ENCODE measurements at regions of chr11 and their contacts with region 1.

Region 1: GRCh38 chr11:123707606-123708205 is 33.8 kb downstream of the ZNF202 start:
- DNase-seq: peak; percentile 17
- H3K4me3 Mint-ChIP-seq: no peak overlapping the region
- H3K27ac Mint-ChIP-seq: no peak overlapping the region
- H3K4me1 Mint-ChIP-seq: no peaks in the 10 kb centered on the region
- H3K27me3 Mint-ChIP-seq: peaks cover 9% of the 10 kb centered on the region

Region 2: DNA sequence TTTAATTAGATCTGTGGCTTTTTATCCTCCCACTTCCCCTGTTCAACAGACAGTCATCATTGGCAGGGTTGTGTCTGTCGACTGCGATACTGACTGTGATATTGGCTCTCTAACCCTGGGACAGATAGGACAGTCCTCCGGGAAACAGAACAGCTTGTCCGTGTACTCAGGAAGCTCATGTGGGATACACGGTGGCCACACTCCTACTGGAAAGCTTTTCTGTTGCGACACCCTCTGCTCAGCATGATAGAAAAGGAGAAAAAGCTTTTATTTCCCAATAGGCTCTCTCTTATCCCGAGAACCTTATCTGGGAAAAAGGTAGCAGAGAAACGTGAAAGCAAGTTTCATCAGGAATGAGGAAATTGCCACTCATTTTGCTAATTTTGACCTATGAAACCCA is 585.4 kb before region 1 on chr11:
- intact Hi-C with region 1: no loop called
- DNase-seq: no peak
- H3K4me3 Mint-ChIP-seq: no peak overlapping the region
- H3K27ac Mint-ChIP-seq: no peak overlapping the region
- H3K4me1 Mint-ChIP-seq: peaks cover 7% of the 10 kb centered on the region
- H3K27me3 Mint-ChIP-seq: peaks cover 1% of the 10 kb centered on the region

Region 3: GRCh38 chr11:123640677-123641494 is 66.8 kb before region 1 on chr11:
- intact Hi-C with region 1: loop called (anchors 1 kb)
- DNase-seq: peak; percentile 29
- H3K4me3 Mint-ChIP-seq: no peak overlapping the region
- H3K27ac Mint-ChIP-seq: no peak overlapping the region
- H3K4me1 Mint-ChIP-seq: peaks cover 2% of the 10 kb centered on the region
- H3K27me3 Mint-ChIP-seq: peaks cover 6% of the 10 kb centered on the region

Region 4: GRCh38 chr11:123719452-123719851 is 11.7 kb after region 1 on chr11:
- intact Hi-C with region 1: no loop called
- DNase-seq: no peak
- H3K4me3 Mint-ChIP-seq: no peak overlapping the region
- H3K27ac Mint-ChIP-seq: no peak overlapping the region
- H3K4me1 Mint-ChIP-seq: no peaks in the 10 kb centered on the region
- H3K27me3 Mint-ChIP-seq: peaks cover 19% of the 10 kb centered on the region

Region 5: GRCh38 chr11:123741159-123742028 is 33.7 kb after region 1 on chr11 and contains the start of gene ZNF202:
- intact Hi-C with region 1: no loop called
- DNase-seq: peak; percentile 86
- H3K4me3 Mint-ChIP-seq: peak within 1 kb of the TSS; percentile 89
- H3K27ac Mint-ChIP-seq: peak within 1 kb of the TSS; percentile 87
- H3K4me1 Mint-ChIP-seq: peaks cover 33% of the 10 kb centered on the region
- H3K27me3 Mint-ChIP-seq: peaks cover 10% of the 10 kb centered on the region
- total RNA-seq, gene ZNF202: 19.2 and 22.3 TPM in 2 replicates

Measured in activated T-helper 2 cell treated with anti-CD3 and anti-CD28 coated beads, Interferon-gamma antibody, Interleukin-2, Interleukin-4, amounts not matched to agents 10 μg/mL and 5 μg/mL and 100 μg/mL, durations not matched to agents 14 hours and 24 hours and 36 hours (primary cell).